Right cardiac atrium (tissue), 5 donors: ENCODE measurements at regions of chr10 and their contacts with region 1.

Region 1: GRCh38 chr10:116385994-116386809 is 41.4 kb upstream of the PNLIPRP3 start:
- DNase-seq: no peak
- ATAC-seq: no peak
- H3K4me3 ChIP-seq: no peak overlapping the region
- H3K27ac ChIP-seq: no peak overlapping the region
- H3K4me1 ChIP-seq: no peaks in the 10 kb centered on the region
- H3K27me3 ChIP-seq: no peaks in the 10 kb centered on the region

Region 2: DNA sequence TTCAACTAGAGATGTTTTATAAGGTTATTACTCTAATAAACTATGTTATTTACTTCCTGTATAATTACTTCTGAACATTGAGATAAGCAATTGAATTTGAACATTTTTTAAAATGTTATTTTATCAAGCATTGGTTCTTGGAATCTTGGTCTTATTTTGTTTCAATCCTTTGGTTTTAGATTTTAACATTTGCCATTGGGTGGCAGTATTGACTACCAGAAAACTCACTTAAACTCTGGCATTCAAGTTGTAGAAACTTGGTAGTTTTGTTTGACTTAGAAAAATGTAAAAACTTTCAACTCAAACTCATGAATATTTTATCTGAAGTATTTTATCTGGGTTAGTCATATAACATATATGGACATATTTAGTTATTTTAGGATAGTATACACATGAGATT is 1244.9 kb before region 1 on chr10:
- intact Hi-C with region 1: loop called in 1 of 4 experiments (anchors 10 kb)
- DNase-seq: no peak
- ATAC-seq: no peak
- H3K4me3 ChIP-seq: no peak overlapping the region
- H3K27ac ChIP-seq: no peak overlapping the region
- H3K4me1 ChIP-seq: no peaks in the 10 kb centered on the region
- H3K27me3 ChIP-seq: no peaks in the 10 kb centered on the region

Region 3: GRCh38 chr10:115355162-115355760 is 1030.9 kb before region 1 on chr10:
- intact Hi-C with region 1: loop called in 3 of 4 experiments (anchors 10 kb)
- DNase-seq: no peak
- ATAC-seq: no peak
- H3K4me3 ChIP-seq: no peak overlapping the region
- H3K27ac ChIP-seq: no peak overlapping the region
- H3K4me1 ChIP-seq: no peaks in the 10 kb centered on the region
- H3K27me3 ChIP-seq: no peaks in the 10 kb centered on the region

Region 4: GRCh38 chr10:115706026-115706781 is 680.0 kb before region 1 on chr10:
- intact Hi-C with region 1: loop called in 3 of 4 experiments (anchors 5 to 10 kb)
- DNase-seq: no peak
- ATAC-seq: no peak
- H3K4me3 ChIP-seq: no peak overlapping the region
- H3K27ac ChIP-seq: no peak overlapping the region
- H3K4me1 ChIP-seq: no peaks in the 10 kb centered on the region
- H3K27me3 ChIP-seq: no peaks in the 10 kb centered on the region

Region 5: GRCh38 chr10:116138897-116139296 is 247.3 kb before region 1 on chr10:
- intact Hi-C with region 1: no loop called
- DNase-seq: no peak
- ATAC-seq: no peak
- H3K4me3 ChIP-seq: no peak overlapping the region
- H3K27ac ChIP-seq: no peak overlapping the region
- H3K4me1 ChIP-seq: no peaks in the 10 kb centered on the region
- H3K27me3 ChIP-seq: no peaks in the 10 kb centered on the region

Region 6: GRCh38 chr10:116316533-116316932 is 69.7 kb before region 1 on chr10:
- intact Hi-C with region 1: no loop called
- DNase-seq: no peak
- ATAC-seq: no peak
- H3K4me3 ChIP-seq: no peak overlapping the region
- H3K27ac ChIP-seq: no peak overlapping the region
- H3K4me1 ChIP-seq: no peaks in the 10 kb centered on the region
- H3K27me3 ChIP-seq: no peaks in the 10 kb centered on the region

Region 7: GRCh38 chr10:116417821-116418220 is 31.6 kb after region 1 on chr10:
- intact Hi-C with region 1: no loop called
- DNase-seq: no peak
- ATAC-seq: no peak
- H3K4me3 ChIP-seq: no peak overlapping the region
- H3K27ac ChIP-seq: no peak overlapping the region
- H3K4me1 ChIP-seq: no peaks in the 10 kb centered on the region
- H3K27me3 ChIP-seq: no peaks in the 10 kb centered on the region

Region 8: GRCh38 chr10:116737627-116738327 is 351.6 kb after region 1 on chr10:
- intact Hi-C with region 1: no loop called
- DNase-seq: no peak
- ATAC-seq: no peak
- H3K4me3 ChIP-seq: no peak overlapping the region
- H3K27ac ChIP-seq: no peak overlapping the region
- H3K4me1 ChIP-seq: peaks cover 5% of the 10 kb centered on the region
- H3K27me3 ChIP-seq: no peaks in the 10 kb centered on the region